ENCODE measurements at regions of chr15 and their contacts with region 1.

Region 1: DNA sequence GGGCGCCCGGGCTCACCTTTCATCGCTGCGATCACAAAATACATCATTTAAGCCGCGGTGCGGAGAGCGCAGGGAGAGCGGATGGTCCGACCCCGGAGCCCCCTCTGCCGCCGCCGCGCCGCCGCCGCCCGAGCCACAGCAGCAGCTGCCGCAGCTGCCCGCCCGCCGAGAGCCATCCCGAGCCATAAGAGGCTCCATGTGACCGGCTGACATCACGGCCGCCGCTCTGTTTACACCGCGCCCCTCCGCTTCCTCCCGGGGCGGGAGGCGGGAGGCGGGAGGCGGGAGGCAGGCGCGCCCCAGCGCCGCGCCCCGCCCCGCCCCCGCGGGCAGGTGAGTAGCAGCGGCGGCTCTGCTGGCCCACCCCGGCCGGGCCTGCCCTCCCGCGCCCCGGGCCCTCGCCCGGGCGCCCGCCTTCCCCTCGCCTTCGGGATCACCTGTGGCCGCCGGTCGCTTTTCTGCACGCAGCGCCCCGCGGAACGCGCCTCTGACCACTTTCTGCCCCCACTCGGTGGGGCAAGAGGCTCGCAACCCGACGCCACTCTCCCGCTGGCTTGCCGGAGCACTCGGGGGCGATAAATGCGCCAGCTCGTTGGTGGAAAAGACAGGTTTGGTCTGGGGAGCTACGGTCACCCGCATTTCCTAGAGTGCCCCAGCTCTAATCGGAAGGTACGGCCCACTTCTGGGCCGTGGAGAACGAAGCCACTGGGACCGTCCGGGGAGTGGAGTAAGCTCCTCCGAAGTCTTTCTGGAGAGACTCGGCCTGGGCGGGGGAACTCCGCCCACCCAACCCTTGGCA is 113.6 kb upstream of the ICE2 start:
- DNase-seq: peak; percentile 75 to 94 (median 85)
- ATAC-seq: peak; percentile 81
- H3K4me3 ChIP-seq: peak overlapping the region; percentile 84
- H3K4me3 Mint-ChIP-seq: peak overlapping the region; percentile 82
- H3K27ac ChIP-seq: peak overlapping the region; percentile 58 to 90
- H3K27ac Mint-ChIP-seq: peak overlapping the region; percentile 85
- H3K4me1 ChIP-seq: peaks cover 12% of the 10 kb centered on the region
- H3K4me1 Mint-ChIP-seq: peaks cover 39% of the 10 kb centered on the region
- H3K27me3 ChIP-seq: no peaks in the 10 kb centered on the region
- H3K27me3 Mint-ChIP-seq: no peaks in the 10 kb centered on the region
- CTCF ChIP-seq: peak; percentile 12

Region 2: GRCh38 chr15:60397772-60398445 is 194.7 kb before region 1 on chr15 and contains the start of gene ANXA2:
- CTCF ChIA-PET with region 1: no interaction called
- POLR2A ChIA-PET with region 1: interaction called, 12 read pairs
- intact Hi-C with region 1: no loop called
- DNase-seq: peak; percentile 66 to 93 (median 84)
- ATAC-seq: peak; percentile 77
- H3K4me3 ChIP-seq: peak within 1 kb of the TSS; percentile 72
- H3K4me3 Mint-ChIP-seq: peak within 1 kb of the TSS; percentile 92
- H3K27ac ChIP-seq: peak within 1 kb of the TSS; percentile 37 to 75
- H3K27ac Mint-ChIP-seq: peak within 1 kb of the TSS; percentile 97
- H3K4me1 ChIP-seq: peaks cover 58% of the 10 kb centered on the region
- H3K4me1 Mint-ChIP-seq: peaks cover 48% of the 10 kb centered on the region
- H3K27me3 ChIP-seq: no peaks in the 10 kb centered on the region
- H3K27me3 Mint-ChIP-seq: peaks cover 10% of the 10 kb centered on the region
- CTCF ChIP-seq: no peak
- total RNA-seq, gene ANXA2: 70.8 to 74.5 TPM

Region 3: DNA sequence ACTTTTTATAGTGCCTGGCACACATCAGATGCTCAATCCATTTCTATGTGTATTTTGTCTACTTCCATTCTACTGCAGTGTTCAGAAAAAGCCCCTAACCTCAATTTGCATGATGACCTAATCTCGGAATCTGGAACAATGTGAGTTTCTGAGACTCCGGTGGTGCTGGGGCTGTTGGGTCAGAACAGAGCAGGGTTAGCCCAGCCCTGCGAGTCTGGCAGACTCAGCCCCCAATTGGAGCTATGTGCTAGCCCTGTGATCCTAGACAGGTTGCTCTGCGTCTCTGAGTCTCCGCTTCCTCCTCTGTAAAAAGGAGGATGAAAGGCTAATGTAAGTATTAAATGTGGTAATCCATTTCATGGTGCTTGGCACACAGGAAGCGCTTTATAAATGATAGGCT is 18.6 kb before region 1 on chr15:
- CTCF ChIA-PET with region 1: no interaction called
- POLR2A ChIA-PET with region 1: interaction called, 240 read pairs
- intact Hi-C with region 1: no loop called
- DNase-seq: peak in 8 of 14 experiments; percentile 25 to 88 (median 60)
- ATAC-seq: peak; percentile 83
- H3K4me3 ChIP-seq: peak overlapping the region; percentile 24
- H3K4me3 Mint-ChIP-seq: peak overlapping the region; percentile 80
- H3K27ac ChIP-seq: peak overlapping the region; percentile 58 to 59
- H3K27ac Mint-ChIP-seq: peak overlapping the region; percentile 84
- H3K4me1 ChIP-seq: peaks cover 83% of the 10 kb centered on the region
- H3K4me1 Mint-ChIP-seq: peaks cover 92% of the 10 kb centered on the region
- H3K27me3 ChIP-seq: no peaks in the 10 kb centered on the region
- H3K27me3 Mint-ChIP-seq: no peaks in the 10 kb centered on the region
- CTCF ChIP-seq: no peak

Region 4: GRCh38 chr15:60649845-60650548 is 57.4 kb after region 1 on chr15:
- CTCF ChIA-PET with region 1: no interaction called
- POLR2A ChIA-PET with region 1: interaction called, 12 read pairs
- intact Hi-C with region 1: loop called in 1 of 2 experiments (anchors 5 kb)
- DNase-seq: peak in 9 of 14 experiments; percentile 4 to 87 (median 11)
- ATAC-seq: peak; percentile 84
- H3K4me3 ChIP-seq: peak overlapping the region; percentile 15
- H3K4me3 Mint-ChIP-seq: peak overlapping the region; percentile 58
- H3K27ac ChIP-seq: peak overlapping the region in 1 of 2 donors; percentile 59
- H3K27ac Mint-ChIP-seq: peak overlapping the region; percentile 79
- H3K4me1 ChIP-seq: peaks cover 30% of the 10 kb centered on the region
- H3K4me1 Mint-ChIP-seq: peaks cover 46% of the 10 kb centered on the region
- H3K27me3 ChIP-seq: no peaks in the 10 kb centered on the region
- H3K27me3 Mint-ChIP-seq: no peaks in the 10 kb centered on the region
- CTCF ChIP-seq: no peak

Region 5: DNA sequence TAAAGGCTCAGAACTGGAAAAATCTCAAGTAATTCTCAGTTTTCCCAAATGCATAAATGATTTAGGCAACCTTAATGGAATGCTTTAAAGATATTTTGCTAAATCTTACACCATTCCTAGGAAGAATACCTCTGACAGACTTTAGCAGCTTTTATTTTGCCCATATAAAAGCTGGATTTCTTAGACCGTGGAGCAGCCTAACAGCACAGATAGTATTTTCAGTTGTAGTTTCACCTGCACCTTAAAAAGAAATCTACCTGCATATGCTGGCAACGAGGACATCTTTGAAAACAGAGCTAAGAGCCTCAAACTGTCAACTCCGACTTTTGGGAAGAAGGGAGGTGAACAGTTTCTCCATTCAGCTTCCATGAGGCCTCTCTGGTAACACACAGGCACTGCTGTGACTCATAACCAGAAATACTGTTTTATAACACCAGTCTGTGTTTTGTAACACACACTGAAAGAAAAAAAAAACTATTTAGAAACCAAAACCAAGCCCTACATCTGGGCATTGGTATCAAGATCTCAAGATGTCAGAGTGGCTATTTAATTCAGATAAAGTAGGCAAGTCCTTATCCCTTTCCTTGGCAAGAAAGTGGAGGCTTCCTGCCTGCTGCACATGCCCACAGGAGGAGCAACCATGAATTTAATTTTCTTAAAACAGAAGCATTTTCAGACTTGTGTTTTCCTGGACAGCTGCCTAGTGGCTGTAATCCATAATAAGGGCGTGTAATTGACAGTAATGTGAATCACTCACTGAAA is 67.9 kb after region 1 on chr15:
- CTCF ChIA-PET with region 1: no interaction called
- POLR2A ChIA-PET with region 1: no interaction called
- intact Hi-C with region 1: no loop called
- DNase-seq: peak in 1 of 14 experiments; percentile 33
- ATAC-seq: no peak
- H3K4me3 ChIP-seq: no peak overlapping the region
- H3K4me3 Mint-ChIP-seq: no peak overlapping the region
- H3K27ac ChIP-seq: no peak overlapping the region
- H3K27ac Mint-ChIP-seq: no peak overlapping the region
- H3K4me1 ChIP-seq: peaks cover 9% of the 10 kb centered on the region
- H3K4me1 Mint-ChIP-seq: peaks cover 24% of the 10 kb centered on the region
- H3K27me3 ChIP-seq: no peaks in the 10 kb centered on the region
- H3K27me3 Mint-ChIP-seq: no peaks in the 10 kb centered on the region
- CTCF ChIP-seq: no peak

Region 6: DNA sequence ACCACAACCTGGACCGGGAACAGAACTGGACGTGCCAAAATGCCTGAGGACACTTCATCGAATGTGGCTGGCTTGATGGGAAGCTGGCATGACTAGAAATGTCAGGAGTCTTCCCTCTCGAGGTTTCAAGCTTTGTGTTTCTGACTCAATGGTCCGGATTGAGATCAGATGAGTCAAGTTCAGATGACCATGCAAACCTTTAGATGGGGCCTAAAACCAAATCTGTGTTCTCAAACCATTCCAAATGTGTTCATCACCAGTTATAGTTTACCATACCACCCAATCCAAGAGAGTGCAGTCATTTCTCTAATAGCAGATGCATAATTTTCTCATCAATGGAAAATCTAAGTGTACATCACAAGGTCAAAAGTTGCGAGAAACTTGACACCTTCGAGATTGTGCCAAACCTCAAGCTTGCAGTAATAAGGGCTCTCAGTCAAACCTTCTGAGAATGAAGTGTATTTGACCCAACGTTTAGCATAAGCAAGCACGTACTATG is 267.5 kb after region 1 on chr15:
- CTCF ChIA-PET with region 1: interaction called, 6 read pairs
- POLR2A ChIA-PET with region 1: interaction called, 23 read pairs
- intact Hi-C with region 1: no loop called
- DNase-seq: peak in 1 of 14 experiments; percentile 46
- ATAC-seq: no peak
- H3K4me3 ChIP-seq: no peak overlapping the region
- H3K4me3 Mint-ChIP-seq: no peak overlapping the region
- H3K27ac ChIP-seq: no peak overlapping the region
- H3K27ac Mint-ChIP-seq: no peak overlapping the region
- H3K4me1 ChIP-seq: no peaks in the 10 kb centered on the region
- H3K4me1 Mint-ChIP-seq: peaks cover 41% of the 10 kb centered on the region
- H3K27me3 ChIP-seq: no peaks in the 10 kb centered on the region
- H3K27me3 Mint-ChIP-seq: no peaks in the 10 kb centered on the region
- CTCF ChIP-seq: no peak

Measured in CD4-positive, alpha-beta T cell (primary cell).